ENCODE measurements at regions of chr2 and their contacts with region 1.

Region 1: DNA sequence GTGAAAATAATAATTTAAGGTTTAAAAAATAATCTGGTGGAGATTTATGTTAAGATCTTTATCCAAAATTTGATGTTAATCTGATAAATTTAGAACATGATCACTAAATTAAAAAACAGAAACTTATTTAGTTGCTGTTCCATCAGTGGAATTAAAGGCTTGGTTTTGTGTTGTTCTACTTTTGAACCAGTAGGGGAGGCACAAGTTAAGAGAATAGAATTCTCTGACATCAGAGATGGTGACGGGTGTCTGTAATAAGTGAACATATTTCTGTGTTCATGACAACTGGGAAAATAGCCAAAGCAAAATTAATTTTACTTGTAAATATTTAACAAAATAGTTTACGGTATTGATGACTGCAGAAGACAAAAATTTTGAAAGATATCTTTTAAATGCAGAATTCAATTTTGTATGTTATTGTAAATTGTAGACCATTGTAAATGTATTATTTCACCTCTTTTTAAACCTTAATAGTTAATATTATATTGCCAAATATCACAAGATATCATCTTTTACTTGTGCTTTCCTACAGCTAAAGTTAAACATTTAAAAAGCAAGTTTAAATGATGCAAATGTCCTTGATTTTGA is 106.0 kb downstream of the UBR3 start:
- DNase-seq: no peak
- H3K4me3 ChIP-seq: peak overlapping the region in 1 of 59 donors; percentile 9
- H3K27ac ChIP-seq: no peak overlapping the region
- H3K27me3 ChIP-seq: no peaks in the 10 kb centered on the region
- CTCF ChIP-seq: peak; percentile 47 to 85 (median 68)

Region 2: DNA sequence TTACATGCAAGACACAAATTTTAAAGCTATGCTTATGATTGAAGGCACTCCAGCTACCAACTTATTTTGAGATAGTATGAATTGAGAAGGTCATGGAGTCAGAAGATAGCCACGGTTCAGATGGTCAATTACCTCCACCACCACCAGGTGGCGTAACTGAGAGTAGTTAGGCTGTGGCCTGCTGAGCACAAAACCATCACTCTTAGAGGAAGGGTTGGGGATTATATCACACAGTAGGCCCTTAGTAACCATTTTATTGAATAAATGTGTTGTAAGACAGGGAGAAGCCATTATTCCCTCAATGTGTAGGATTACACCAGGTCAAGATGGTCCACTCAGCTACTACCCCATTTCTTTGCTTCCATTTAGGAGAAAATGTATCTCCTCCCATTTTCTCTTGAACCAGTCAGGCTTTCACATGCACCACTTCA is 404.9 kb before region 1 on chr2:
- intact Hi-C with region 1: loop called in 1 of 2 experiments (anchors 5 kb)
- DNase-seq: peak in 4 of 10 donors; percentile 31 to 66 (median 52)
- H3K4me3 ChIP-seq: no peak overlapping the region
- H3K27ac ChIP-seq: no peak overlapping the region
- H3K27me3 ChIP-seq: no peaks in the 10 kb centered on the region
- CTCF ChIP-seq: peak; percentile 14 to 88 (median 78)

Region 3: DNA sequence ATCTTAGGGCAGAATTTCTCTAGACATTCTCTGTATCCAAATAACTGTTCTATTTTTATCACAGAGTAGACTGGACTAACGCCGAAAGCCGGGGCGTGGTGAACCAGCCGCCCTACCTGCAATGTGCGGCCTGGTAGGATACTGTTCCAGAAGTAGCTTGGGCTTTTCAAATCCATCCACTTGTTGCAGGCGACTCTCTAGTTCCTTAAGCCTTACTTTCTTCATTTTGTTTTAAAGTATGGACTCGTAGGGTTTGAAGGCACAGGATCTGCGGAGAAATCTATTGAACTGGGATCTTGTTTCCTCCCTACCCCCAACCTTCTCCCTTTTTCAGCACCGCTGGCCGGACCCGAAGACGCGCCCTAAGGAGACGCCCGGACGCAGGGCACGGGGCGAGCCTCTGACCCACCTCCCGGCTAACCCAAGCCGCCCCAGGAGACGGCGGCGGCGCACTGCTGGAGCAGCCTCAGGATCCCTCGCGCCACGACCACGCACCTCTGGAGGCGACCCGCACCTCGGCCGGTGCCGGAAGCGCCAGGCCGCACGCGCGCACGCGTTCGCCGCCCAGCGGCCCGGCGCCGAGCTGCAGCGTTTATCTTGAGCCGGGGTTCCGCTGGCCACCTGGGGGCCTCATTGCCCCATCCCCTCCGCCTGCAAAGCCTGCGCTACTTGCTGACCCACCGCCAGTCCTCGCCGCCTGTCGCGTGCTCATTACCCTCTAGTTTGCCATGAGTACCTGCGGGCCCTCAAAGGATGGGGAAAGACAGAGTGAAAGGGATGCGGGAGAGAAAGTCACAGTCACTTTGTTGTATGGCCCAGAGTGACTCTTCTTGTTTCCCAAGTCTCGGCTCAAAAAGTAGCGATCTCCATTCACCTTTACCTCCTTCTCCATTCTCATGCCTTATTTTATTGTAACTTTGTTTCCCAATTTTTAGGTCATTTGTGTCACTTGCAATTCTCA is 108.6 kb before region 1 on chr2 and contains the start of gene METTL5:
- intact Hi-C with region 1: loop called (anchors 1 to 2 kb)
- DNase-seq: peak; percentile 70 to 89 (median 78)
- H3K4me3 ChIP-seq: peak within 1 kb of the TSS; percentile 60 to 99 (median 84)
- H3K27ac ChIP-seq: peak within 1 kb of the TSS in 55 of 59 donors; percentile 4 to 92 (median 74)
- H3K27me3 ChIP-seq: no peaks in the 10 kb centered on the region
- CTCF ChIP-seq: peak; percentile 76 to 100 (median 99)
- total RNA-seq, gene METTL5: 26.8 to 69.9 (median 47.5) TPM

Region 4: DNA sequence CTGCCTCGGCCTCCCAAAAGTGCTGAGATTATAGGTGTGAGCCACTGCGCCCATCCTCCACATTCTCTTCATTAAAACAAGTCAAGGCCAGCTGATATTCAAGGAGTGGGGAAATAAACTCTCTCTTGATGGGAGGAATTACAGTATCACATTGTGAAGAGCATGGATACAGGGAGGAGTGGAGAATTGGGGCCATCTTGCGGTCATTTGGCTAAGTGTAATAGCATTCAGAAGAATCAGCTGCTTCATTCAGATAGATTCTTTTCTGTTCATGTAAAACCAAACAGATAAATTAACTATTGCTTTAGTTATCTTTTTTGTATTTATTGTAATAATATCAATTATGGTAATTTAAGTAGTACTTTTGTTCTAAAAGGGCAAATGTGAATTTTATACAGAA is 50.3 kb after region 1 on chr2:
- intact Hi-C with region 1: loop called in 1 of 2 experiments (anchors 10 kb)
- DNase-seq: peak in 2 of 10 donors; percentile 29 to 48
- H3K4me3 ChIP-seq: no peak overlapping the region
- H3K27ac ChIP-seq: no peak overlapping the region
- H3K27me3 ChIP-seq: no peaks in the 10 kb centered on the region
- CTCF ChIP-seq: peak in 53 of 56 donors; percentile 15 to 72 (median 43)